Endothelial cell of umbilical vein (primary cell): ENCODE measurements at regions of chr6 and their contacts with region 1.

Region 1: DNA sequence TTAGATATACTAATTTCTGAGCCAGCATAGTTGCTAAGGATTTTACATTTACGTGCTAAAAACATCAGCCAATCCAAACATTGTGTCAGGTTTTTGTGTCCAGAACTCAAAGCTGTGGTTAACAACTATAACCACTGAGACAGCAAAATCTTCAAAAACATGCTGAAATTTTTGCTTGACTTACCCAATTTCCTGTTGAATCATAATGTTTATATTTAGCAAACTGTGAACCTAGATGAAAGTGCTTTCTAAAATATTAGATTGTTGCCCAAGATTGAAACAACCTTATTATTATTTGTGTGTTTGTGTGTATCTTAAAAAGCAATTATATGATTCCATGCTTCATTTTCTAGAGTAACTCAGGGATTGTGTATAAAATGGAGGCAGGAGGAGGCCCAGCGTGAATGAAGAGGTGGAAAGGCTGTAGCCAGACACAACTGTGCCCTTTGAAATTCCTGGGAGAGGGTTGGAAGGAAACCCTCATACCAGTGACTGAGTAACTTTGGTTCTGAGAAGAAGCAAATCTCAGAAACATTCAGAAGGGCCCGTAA is 48.0 kb downstream of the ARMC2 start:
- DNase-seq: peak; percentile 81
- H3K4me3 ChIP-seq: no peak overlapping the region
- H3K27ac ChIP-seq: peak overlapping the region; percentile 96
- H3K4me1 ChIP-seq: peaks cover 22% of the 10 kb centered on the region
- H3K27me3 ChIP-seq: no peaks in the 10 kb centered on the region
- CTCF ChIP-seq: no peak
- POLR2A ChIP-seq: no peak

Region 2: GRCh38 chr6:108565893-108566292 is 330.3 kb before region 1 on chr6:
- CTCF ChIA-PET with region 1: interaction called, 21 read pairs
- POLR2A ChIA-PET with region 1: no interaction called
- dilution Hi-C with region 1: no loop called
- intact Hi-C with region 1: no loop called
- DNase-seq: peak; percentile 69
- H3K4me3 ChIP-seq: no peak overlapping the region
- H3K27ac ChIP-seq: peak overlapping the region; percentile 4
- H3K4me1 ChIP-seq: peaks cover 46% of the 10 kb centered on the region
- H3K27me3 ChIP-seq: no peaks in the 10 kb centered on the region
- CTCF ChIP-seq: no peak
- POLR2A ChIP-seq: no peak

Region 3: GRCh38 chr6:108835218-108835850 is 60.9 kb before region 1 on chr6:
- CTCF ChIA-PET with region 1: interaction called, 44 read pairs
- POLR2A ChIA-PET with region 1: no interaction called
- dilution Hi-C with region 1: no loop called
- intact Hi-C with region 1: loop called (anchors 1 kb)
- DNase-seq: peak; percentile 82
- H3K4me3 ChIP-seq: no peak overlapping the region
- H3K27ac ChIP-seq: no peak overlapping the region
- H3K4me1 ChIP-seq: no peaks in the 10 kb centered on the region
- H3K27me3 ChIP-seq: peaks cover 0 to 10% of the 10 kb centered on the region in 2 experiments
- CTCF ChIP-seq: peak; percentile 80 to 95
- POLR2A ChIP-seq: no peak

Region 4: GRCh38 chr6:108883172-108883571 is 13.0 kb before region 1 on chr6:
- CTCF ChIA-PET with region 1: interaction called, 16 read pairs
- POLR2A ChIA-PET with region 1: no interaction called
- dilution Hi-C with region 1: no loop called
- intact Hi-C with region 1: no loop called
- DNase-seq: no peak
- H3K4me3 ChIP-seq: no peak overlapping the region
- H3K27ac ChIP-seq: no peak overlapping the region
- H3K4me1 ChIP-seq: no peaks in the 10 kb centered on the region
- H3K27me3 ChIP-seq: no peaks in the 10 kb centered on the region
- CTCF ChIP-seq: no peak
- POLR2A ChIP-seq: no peak

Region 5: GRCh38 chr6:109073344-109074132 is 177.4 kb after region 1 on chr6:
- CTCF ChIA-PET with region 1: interaction called, 52 read pairs
- POLR2A ChIA-PET with region 1: no interaction called
- dilution Hi-C with region 1: no loop called
- intact Hi-C with region 1: loop called (anchors 1 kb)
- DNase-seq: peak; percentile 77
- H3K4me3 ChIP-seq: no peak overlapping the region
- H3K27ac ChIP-seq: no peak overlapping the region
- H3K4me1 ChIP-seq: peaks cover 5% of the 10 kb centered on the region
- H3K27me3 ChIP-seq: no peaks in the 10 kb centered on the region
- CTCF ChIP-seq: peak; percentile 32 to 55
- POLR2A ChIP-seq: no peak

Region 6: GRCh38 chr6:109513571-109514071 is 617.4 kb after region 1 on chr6:
- CTCF ChIA-PET with region 1: no interaction called
- POLR2A ChIA-PET with region 1: no interaction called
- dilution Hi-C with region 1: no loop called
- intact Hi-C with region 1: no loop called
- DNase-seq: peak; percentile 63
- H3K4me3 ChIP-seq: no peak overlapping the region
- H3K27ac ChIP-seq: no peak overlapping the region
- H3K4me1 ChIP-seq: no peaks in the 10 kb centered on the region
- H3K27me3 ChIP-seq: peaks cover 0 to 2% of the 10 kb centered on the region in 2 experiments
- CTCF ChIP-seq: no peak
- POLR2A ChIP-seq: no peak